HCT116 (cell line): ENCODE measurements at regions of chr12 and their contacts with region 1.

Region 1: DNA sequence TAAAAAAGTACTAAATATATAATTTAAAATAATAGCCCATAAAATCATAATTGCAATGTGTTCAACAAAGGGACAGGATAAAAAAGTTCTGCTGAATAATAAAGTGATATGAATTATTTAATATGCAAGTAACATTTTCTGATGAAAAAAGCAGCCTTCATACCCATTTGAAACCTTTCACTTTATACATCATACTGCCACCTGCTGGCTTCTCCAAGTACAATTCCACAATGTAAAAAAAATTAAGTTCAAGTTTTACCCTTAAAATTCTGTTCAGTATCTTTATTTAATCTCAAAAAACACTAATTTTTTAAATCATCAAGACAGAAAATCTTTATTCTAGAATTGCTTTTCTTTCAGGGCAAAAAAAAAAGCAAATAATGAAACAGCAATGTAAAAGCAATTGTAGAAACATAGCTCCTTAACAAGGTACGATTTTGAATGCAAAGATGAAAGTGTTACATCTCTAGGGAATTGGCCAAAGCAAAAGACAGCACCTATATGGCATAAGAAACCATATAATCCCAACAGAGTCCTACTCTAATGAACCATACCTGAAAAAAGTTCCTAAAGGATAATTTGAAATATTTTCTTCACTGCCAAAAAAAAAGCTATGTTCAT is 15.0 kb downstream of the MDM1 start:
- DNase-seq: peak; percentile 27
- ATAC-seq: no peak
- H3K4me3 ChIP-seq: no peak overlapping the region
- H3K27ac ChIP-seq: no peak overlapping the region
- H3K4me1 ChIP-seq: no peaks in the 10 kb centered on the region
- H3K27me3 ChIP-seq: no peaks in the 10 kb centered on the region
- CTCF ChIP-seq: peak; percentile 49 to 63 (median 60); a peak in 5 of 6 replicates
- POLR2A ChIP-seq: no peak
- RAD21 ChIP-seq: peak; percentile 63

Region 2: GRCh38 chr12:68040450-68041075 is 276.6 kb before region 1 on chr12:
- CTCF ChIA-PET with region 1: interaction called, 35 read pairs
- POLR2A ChIA-PET with region 1: no interaction called
- RAD21 ChIA-PET with region 1: interaction called in 1 of 2 experiments, 4 read pairs
- intact Hi-C with region 1: loop called (anchors 2 kb)
- DNase-seq: peak; percentile 65
- ATAC-seq: peak; percentile 92
- H3K4me3 ChIP-seq: no peak overlapping the region
- H3K27ac ChIP-seq: no peak overlapping the region
- H3K4me1 ChIP-seq: no peaks in the 10 kb centered on the region
- H3K27me3 ChIP-seq: no peaks in the 10 kb centered on the region
- CTCF ChIP-seq: peak; percentile 61 to 95 (median 85); a peak in 5 of 6 replicates
- POLR2A ChIP-seq: no peak
- RAD21 ChIP-seq: peak; percentile 86

Region 3: GRCh38 chr12:68223083-68223747 is 93.9 kb before region 1 on chr12:
- CTCF ChIA-PET with region 1: interaction called, 25 read pairs
- POLR2A ChIA-PET with region 1: no interaction called
- RAD21 ChIA-PET with region 1: no interaction called
- intact Hi-C with region 1: loop called (anchors 1 kb)
- DNase-seq: peak; percentile 76
- ATAC-seq: peak; percentile 100
- H3K4me3 ChIP-seq: peak overlapping the region in 1 of 2 experiments; percentile 34; a peak in 2 of 4 replicates
- H3K27ac ChIP-seq: no peak overlapping the region
- H3K4me1 ChIP-seq: peaks cover 0 to 8% of the 10 kb centered on the region in 2 experiments; a peak in 1 of 4 replicates
- H3K27me3 ChIP-seq: no peaks in the 10 kb centered on the region
- CTCF ChIP-seq: peak; percentile 71 to 91 (median 81)
- POLR2A ChIP-seq: no peak
- RAD21 ChIP-seq: peak; percentile 93

Region 4: GRCh38 chr12:68331869-68332727 is 14.9 kb after region 1 on chr12 and contains the start of gene MDM1:
- CTCF ChIA-PET with region 1: interaction called, 12 read pairs
- POLR2A ChIA-PET with region 1: no interaction called
- RAD21 ChIA-PET with region 1: no interaction called
- intact Hi-C with region 1: no loop called
- DNase-seq: peak; percentile 95
- ATAC-seq: peak; percentile 98
- H3K4me3 ChIP-seq: peak within 1 kb of the TSS; percentile 71 to 81
- H3K27ac ChIP-seq: peak within 1 kb of the TSS; percentile 24; the same call in 1 of the 2 replicates
- H3K4me1 ChIP-seq: peaks cover 7 to 13% of the 10 kb centered on the region in 2 experiments
- H3K27me3 ChIP-seq: no peaks in the 10 kb centered on the region
- CTCF ChIP-seq: no peak
- POLR2A ChIP-seq: peak; percentile 53
- RAD21 ChIP-seq: no peak
- total RNA-seq, gene MDM1: 10.0 TPM

Region 5: DNA sequence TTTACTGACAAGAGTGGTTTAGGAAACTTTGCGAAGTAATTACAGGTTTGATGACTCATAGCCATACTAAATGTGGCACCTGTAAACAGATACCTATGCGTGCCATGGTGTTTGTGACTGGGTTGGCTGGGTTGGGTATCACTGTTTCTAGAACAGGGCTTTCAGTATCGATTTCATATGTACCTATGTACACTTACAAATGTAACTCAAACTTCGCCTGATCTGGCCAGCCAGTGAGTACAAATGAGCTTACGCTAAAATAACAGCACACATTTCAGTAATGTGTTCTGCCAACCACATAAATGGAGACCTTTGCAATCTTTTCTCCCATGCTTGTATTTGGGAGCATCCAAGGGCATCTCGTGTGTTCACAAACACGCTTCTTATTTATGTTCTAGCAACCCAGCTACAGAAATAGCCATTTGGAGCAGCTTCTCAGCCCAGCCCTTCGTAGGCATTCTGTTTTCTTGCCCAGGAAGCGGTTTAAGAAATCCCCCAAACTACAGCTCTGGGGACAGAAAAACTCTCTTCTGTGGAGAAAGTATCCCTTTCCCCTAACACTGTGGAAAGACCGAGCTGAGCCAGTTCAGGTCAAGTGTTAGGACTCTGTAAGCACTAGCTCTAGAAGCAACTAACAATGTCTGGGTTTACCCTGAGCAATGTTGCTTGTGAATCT is 57.3 kb after region 1 on chr12:
- CTCF ChIA-PET with region 1: no interaction called
- POLR2A ChIA-PET with region 1: no interaction called
- RAD21 ChIA-PET with region 1: no interaction called
- intact Hi-C with region 1: no loop called
- DNase-seq: no peak
- ATAC-seq: no peak
- H3K4me3 ChIP-seq: no peak overlapping the region
- H3K27ac ChIP-seq: no peak overlapping the region
- H3K4me1 ChIP-seq: peaks cover 0 to 6% of the 10 kb centered on the region in 2 experiments; a peak in 1 of 4 replicates
- H3K27me3 ChIP-seq: peaks cover 5% of the 10 kb centered on the region; the same call in 1 of the 2 replicates
- CTCF ChIP-seq: no peak
- POLR2A ChIP-seq: no peak
- RAD21 ChIP-seq: no peak